ENCODE measurements at regions of chr4 and their contacts with region 1.

Region 1: DNA sequence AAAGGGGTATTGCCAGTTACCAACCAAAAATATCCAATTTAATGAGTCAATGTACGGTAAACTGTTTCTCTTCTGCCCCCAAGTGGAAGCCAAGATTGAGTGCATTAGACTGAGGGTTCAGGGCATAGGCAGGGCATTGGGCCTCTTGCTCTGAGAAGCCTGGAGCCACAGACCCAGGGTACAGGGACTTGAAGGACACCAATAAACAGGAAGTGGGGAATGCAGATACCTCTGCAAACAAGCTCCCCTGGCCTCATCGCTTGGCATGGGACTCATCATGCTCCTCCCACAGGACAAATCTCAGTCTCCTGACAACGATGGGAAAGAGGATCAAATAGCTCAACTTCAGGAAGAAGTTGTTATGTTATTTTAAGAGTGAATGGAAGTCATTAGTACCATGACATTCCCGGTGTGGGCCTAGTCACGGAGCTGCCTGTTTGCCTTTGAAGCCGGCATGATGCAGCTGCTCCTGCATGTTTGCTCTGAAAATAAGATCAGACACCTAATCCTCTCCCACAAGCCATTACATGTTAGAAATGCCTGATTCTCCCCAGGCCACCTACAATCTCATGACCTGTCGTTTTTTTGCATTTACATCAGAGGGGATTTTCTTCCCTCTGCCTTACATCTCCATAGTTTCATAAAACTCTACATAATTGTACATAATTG is 224.2 kb downstream of the RCHY1 start:
- DNase-seq: peak; percentile 47
- ATAC-seq: peak; percentile 99
- H3K4me3 ChIP-seq: no peak overlapping the region
- H3K27ac ChIP-seq: no peak overlapping the region
- H3K4me1 ChIP-seq: no peaks in the 10 kb centered on the region
- H3K27me3 ChIP-seq: no peaks in the 10 kb centered on the region
- CTCF ChIP-seq: peak; percentile 52 to 71 (median 68)
- POLR2A ChIP-seq: no peak
- RAD21 ChIP-seq: peak; percentile 84

Region 2: GRCh38 chr4:74874753-74875367 is 415.2 kb before region 1 on chr4:
- CTCF ChIA-PET with region 1: interaction called, 12 read pairs
- POLR2A ChIA-PET with region 1: no interaction called
- RAD21 ChIA-PET with region 1: no interaction called
- intact Hi-C with region 1: loop called (anchors 1 kb)
- DNase-seq: peak; percentile 73
- ATAC-seq: peak; percentile 97
- H3K4me3 ChIP-seq: no peak overlapping the region
- H3K27ac ChIP-seq: no peak overlapping the region
- H3K4me1 ChIP-seq: no peaks in the 10 kb centered on the region
- H3K27me3 ChIP-seq: no peaks in the 10 kb centered on the region
- CTCF ChIP-seq: peak; percentile 71 to 93 (median 88); a peak in 5 of 6 replicates
- POLR2A ChIP-seq: no peak
- RAD21 ChIP-seq: peak; percentile 76

Region 3: GRCh38 chr4:74932816-74933561 is 357.1 kb before region 1 on chr4 and contains the start of gene PARM1:
- CTCF ChIA-PET with region 1: interaction called, 9 read pairs
- POLR2A ChIA-PET with region 1: no interaction called
- RAD21 ChIA-PET with region 1: no interaction called
- intact Hi-C with region 1: loop called (anchors 1 kb)
- DNase-seq: peak; percentile 81
- ATAC-seq: peak; percentile 96
- H3K4me3 ChIP-seq: peak within 1 kb of the TSS; percentile 74 to 84
- H3K27ac ChIP-seq: peak within 1 kb of the TSS; percentile 30; the same call in 1 of the 2 replicates
- H3K4me1 ChIP-seq: peaks cover 0 to 17% of the 10 kb centered on the region in 2 experiments; a peak in 1 of 4 replicates
- H3K27me3 ChIP-seq: no peaks in the 10 kb centered on the region
- CTCF ChIP-seq: peak; percentile 82 to 84 (median 83)
- POLR2A ChIP-seq: no peak
- RAD21 ChIP-seq: peak; percentile 94
- total RNA-seq, gene PARM1: 11.7 TPM